Naive thymus-derived CD4-positive, alpha-beta T cell (primary cell): ENCODE measurements at regions of chr4 and their contacts with region 1.

Region 1: DNA sequence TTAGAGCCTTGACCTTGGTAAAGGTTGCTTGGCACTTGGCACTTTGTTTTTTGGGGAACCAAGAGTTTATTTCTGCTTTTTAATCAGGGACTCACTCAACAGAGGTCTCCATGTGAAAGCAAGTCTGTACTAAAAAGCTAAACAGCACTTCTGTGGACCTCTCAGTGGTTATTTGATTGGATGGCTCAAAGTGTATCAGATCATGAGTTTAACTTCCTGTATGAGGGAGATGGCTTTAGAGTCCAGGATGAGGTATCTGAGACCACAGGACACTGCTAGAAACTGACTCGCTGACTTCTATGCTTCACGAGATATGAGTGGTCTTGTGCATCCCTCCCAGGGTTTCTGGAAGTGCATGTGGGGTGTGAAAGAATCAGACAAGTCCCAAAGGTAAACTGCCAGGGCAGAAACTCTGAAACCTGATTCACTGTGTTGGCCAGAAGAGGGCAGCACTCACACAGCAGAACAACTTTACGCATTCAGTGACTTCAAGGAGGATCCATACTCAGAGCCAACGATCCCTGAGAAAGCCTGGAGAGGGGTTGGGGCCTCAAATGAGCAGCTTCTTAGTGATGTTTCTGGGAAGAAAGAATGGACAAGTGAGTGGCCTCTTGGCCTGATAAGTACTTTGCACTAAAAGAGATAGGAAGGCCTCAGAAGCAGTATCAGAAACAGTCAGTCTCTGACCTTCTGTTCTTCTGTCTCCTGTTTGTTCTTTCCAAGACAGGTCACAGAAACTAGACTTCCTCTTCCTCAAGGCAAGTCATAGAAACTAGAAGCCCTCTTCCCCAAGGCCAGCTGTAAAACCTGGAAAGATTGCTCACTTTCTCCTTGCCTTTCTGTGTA is 220.3 kb upstream of the CXCL13 start:
- DNase-seq: peak in 7 of 9 donors; percentile 19 to 51 (median 39)
- ATAC-seq: peak; percentile 72
- H3K4me3 ChIP-seq: no peak overlapping the region
- H3K4me3 Mint-ChIP-seq: no peak overlapping the region
- H3K27ac ChIP-seq: no peak overlapping the region
- H3K27ac Mint-ChIP-seq: no peak overlapping the region
- H3K4me1 ChIP-seq: no peaks in the 10 kb centered on the region
- H3K4me1 Mint-ChIP-seq: peaks cover 0 to 8% (median 0%) of the 10 kb centered on the region in 7 donors
- H3K27me3 ChIP-seq: no peaks in the 10 kb centered on the region
- H3K27me3 Mint-ChIP-seq: peaks cover 0 to 8% (median 0%) of the 10 kb centered on the region in 5 donors

Region 2: GRCh38 chr4:77418333-77419038 is 33.1 kb after region 1 on chr4:
- CTCF ChIA-PET with region 1: no interaction called
- POLR2A ChIA-PET with region 1: no interaction called
- intact Hi-C with region 1: loop called in 1 of 2 experiments (anchors 1 kb)
- DNase-seq: peak in 2 of 9 donors; percentile 0 to 9
- ATAC-seq: no peak
- H3K4me3 ChIP-seq: no peak overlapping the region
- H3K4me3 Mint-ChIP-seq: no peak overlapping the region
- H3K27ac ChIP-seq: no peak overlapping the region
- H3K27ac Mint-ChIP-seq: no peak overlapping the region
- H3K4me1 ChIP-seq: no peaks in the 10 kb centered on the region
- H3K4me1 Mint-ChIP-seq: no peaks in the 10 kb centered on the region
- H3K27me3 ChIP-seq: no peaks in the 10 kb centered on the region
- H3K27me3 Mint-ChIP-seq: peaks cover 5 to 27% (median 9%) of the 10 kb centered on the region in 5 donors